ENCODE measurements at regions of chr4 and their contacts with region 1.

Region 1: DNA sequence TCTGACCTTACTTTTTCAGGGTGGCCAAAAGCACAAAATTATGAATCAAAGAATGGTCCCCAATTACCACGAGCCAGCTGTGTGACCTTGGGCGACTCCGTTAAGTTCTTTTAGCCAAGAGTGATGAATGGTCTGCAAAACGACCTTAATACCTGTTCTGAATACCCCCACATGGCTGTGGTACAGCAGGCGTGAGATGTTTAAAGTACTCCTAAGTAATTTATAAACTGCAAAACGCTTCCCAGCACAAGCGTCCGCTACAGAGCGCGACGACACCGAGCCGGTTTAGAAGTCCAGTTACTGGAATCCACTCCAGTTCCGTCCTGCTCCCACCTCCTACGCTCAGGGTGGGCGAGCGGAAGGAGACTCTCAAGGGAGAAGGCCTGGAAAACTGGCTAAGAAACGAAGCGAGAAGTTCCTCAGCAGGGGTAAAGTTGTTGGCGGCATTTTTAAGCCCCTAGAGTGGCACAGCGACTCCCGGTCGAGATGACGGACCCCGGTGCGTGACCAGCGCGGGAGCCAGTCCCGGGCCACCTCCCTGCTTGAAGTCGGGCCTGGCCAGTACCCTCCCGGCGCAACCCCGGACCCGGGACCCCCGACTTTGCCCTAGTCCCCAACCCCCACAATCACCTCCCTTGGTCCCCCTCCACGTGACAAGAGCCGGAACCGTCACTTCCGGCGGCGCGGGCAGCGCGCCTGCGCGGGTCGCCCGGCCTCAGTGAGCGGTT is 683 bp upstream of the BMP2K start:
- DNase-seq: peak; percentile 84
- H3K4me3 Mint-ChIP-seq: peak overlapping the region; percentile 90
- H3K27ac Mint-ChIP-seq: peak overlapping the region; percentile 95
- H3K4me1 Mint-ChIP-seq: peaks cover 17% of the 10 kb centered on the region
- H3K27me3 Mint-ChIP-seq: no peaks in the 10 kb centered on the region

Region 2: GRCh38 chr4:77075869-77076799 is 1699.3 kb before region 1 on chr4 and contains the start of gene CCNI:
- CTCF ChIA-PET with region 1: no interaction called
- intact Hi-C with region 1: loop called (anchors 10 kb)
- DNase-seq: peak; percentile 93
- H3K4me3 Mint-ChIP-seq: peak within 1 kb of the TSS; percentile 99
- H3K27ac Mint-ChIP-seq: peak within 1 kb of the TSS; percentile 100
- H3K4me1 Mint-ChIP-seq: peaks cover 40% of the 10 kb centered on the region
- H3K27me3 Mint-ChIP-seq: no peaks in the 10 kb centered on the region
- total RNA-seq, gene CCNI: 211 to 218 TPM

Region 3: GRCh38 chr4:77800483-77801259 is 974.8 kb before region 1 on chr4:
- CTCF ChIA-PET with region 1: no interaction called
- intact Hi-C with region 1: loop called (anchors 1 kb)
- DNase-seq: no peak
- H3K4me3 Mint-ChIP-seq: peak overlapping the region; percentile 70
- H3K27ac Mint-ChIP-seq: peak overlapping the region; percentile 88
- H3K4me1 Mint-ChIP-seq: peaks cover 81% of the 10 kb centered on the region
- H3K27me3 Mint-ChIP-seq: no peaks in the 10 kb centered on the region

Region 4: GRCh38 chr4:78644744-78645330 is 130.6 kb before region 1 on chr4:
- CTCF ChIA-PET with region 1: interaction called, 4 read pairs
- intact Hi-C with region 1: loop called (anchors 1 kb)
- DNase-seq: peak; percentile 78
- H3K4me3 Mint-ChIP-seq: no peak overlapping the region
- H3K27ac Mint-ChIP-seq: no peak overlapping the region
- H3K4me1 Mint-ChIP-seq: peaks cover 7% of the 10 kb centered on the region
- H3K27me3 Mint-ChIP-seq: no peaks in the 10 kb centered on the region

Region 5: DNA sequence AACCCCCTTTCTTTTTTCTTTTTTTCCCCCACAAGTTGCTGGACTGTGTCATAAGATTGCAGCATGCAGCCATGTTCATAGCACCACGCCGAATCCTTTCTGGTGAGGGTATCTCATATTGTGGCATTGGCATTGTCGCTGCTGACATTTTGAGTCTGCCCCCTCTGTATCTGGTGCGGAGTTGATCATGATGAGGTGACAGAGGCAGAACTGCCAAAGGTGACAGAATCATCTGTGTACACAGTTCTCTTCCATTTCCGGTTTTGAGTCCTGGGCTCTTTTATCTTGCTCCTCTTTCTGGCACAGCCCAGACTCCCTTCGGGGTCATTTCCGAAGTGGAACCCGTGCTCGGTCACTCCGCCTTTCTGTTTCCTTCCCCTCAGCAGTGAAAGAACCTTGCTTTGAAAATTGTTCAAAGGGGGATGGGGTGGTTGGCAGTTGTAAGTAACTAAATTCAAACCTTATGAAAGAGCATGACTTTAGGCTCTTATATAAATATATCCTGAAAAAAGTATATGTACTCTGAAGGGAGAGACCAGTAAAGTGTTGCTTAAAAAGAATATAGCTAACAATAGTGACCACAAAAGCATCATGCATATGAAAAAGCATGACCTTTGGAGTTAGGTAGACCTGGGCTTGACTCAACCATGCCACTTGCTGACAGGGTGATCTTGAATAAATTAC is 54.3 kb before region 1 on chr4:
- CTCF ChIA-PET with region 1: no interaction called
- intact Hi-C with region 1: loop called (anchors 1 kb)
- DNase-seq: peak; percentile 67
- H3K4me3 Mint-ChIP-seq: no peak overlapping the region
- H3K27ac Mint-ChIP-seq: no peak overlapping the region
- H3K4me1 Mint-ChIP-seq: peaks cover 19% of the 10 kb centered on the region
- H3K27me3 Mint-ChIP-seq: no peaks in the 10 kb centered on the region

Region 6: GRCh38 chr4:78864405-78865024 is 89.0 kb after region 1 on chr4:
- CTCF ChIA-PET with region 1: interaction called, 3 read pairs
- intact Hi-C with region 1: loop called (anchors 2 kb)
- DNase-seq: peak; percentile 15
- H3K4me3 Mint-ChIP-seq: no peak overlapping the region
- H3K27ac Mint-ChIP-seq: no peak overlapping the region
- H3K4me1 Mint-ChIP-seq: peaks cover 6% of the 10 kb centered on the region
- H3K27me3 Mint-ChIP-seq: no peaks in the 10 kb centered on the region